Heart left ventricle (tissue), 16 donors: ENCODE measurements at regions of chrX and their contacts with region 1.

Region 1: GRCh38 chrX:34585561-34585960 is 71.5 kb downstream of the TMEM47 start:
- DNase-seq: no peak
- ATAC-seq: no peak
- H3K4me3 ChIP-seq: peak overlapping the region in 2 of 12 donors; percentile 18 to 29
- H3K27ac ChIP-seq: peak overlapping the region in 1 of 12 donors; percentile 19
- H3K4me1 ChIP-seq: no peaks in the 10 kb centered on the region
- H3K27me3 ChIP-seq: no peaks in the 10 kb centered on the region
- CTCF ChIP-seq: no peak
- POLR2A ChIP-seq: no peak

Region 2: DNA sequence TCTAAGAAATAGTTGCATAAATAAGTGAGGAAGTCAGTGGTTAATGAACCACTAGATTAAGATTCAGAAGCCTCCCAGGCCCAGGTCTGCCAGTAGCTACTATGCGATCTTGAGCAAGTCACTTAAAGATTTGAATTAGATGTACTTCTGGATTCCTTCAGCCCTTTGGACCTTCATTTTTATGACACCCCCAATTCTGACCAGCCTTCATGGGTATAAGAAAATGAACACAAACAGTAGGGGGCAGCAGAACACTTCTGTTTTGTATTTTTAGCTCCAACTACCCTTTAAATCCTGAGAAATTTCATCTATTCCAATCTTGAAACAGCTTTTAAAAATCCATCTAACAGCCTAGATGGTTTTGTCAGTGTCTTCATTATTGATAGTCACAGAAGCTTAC is 52.6 kb after region 1 on chrX:
- intact Hi-C with region 1: no loop called
- DNase-seq: no peak
- ATAC-seq: no peak
- H3K4me3 ChIP-seq: no peak overlapping the region
- H3K27ac ChIP-seq: no peak overlapping the region
- H3K4me1 ChIP-seq: peaks cover 0 to 32% (median 0%) of the 10 kb centered on the region in 12 donors
- H3K27me3 ChIP-seq: no peaks in the 10 kb centered on the region
- CTCF ChIP-seq: peak; percentile 34 to 61 (median 44)
- POLR2A ChIP-seq: no peak

Region 3: GRCh38 chrX:34656842-34657725 is 71.5 kb after region 1 on chrX and contains the start of gene TMEM47:
- intact Hi-C with region 1: loop called in 1 of 10 experiments (anchors 10 kb)
- DNase-seq: peak; percentile 78 to 81 (median 79)
- ATAC-seq: peak; percentile 95 to 99 (median 98)
- H3K4me3 ChIP-seq: peak within 1 kb of the TSS; percentile 26 to 94 (median 68)
- H3K27ac ChIP-seq: peak within 1 kb of the TSS; percentile 57 to 89 (median 82)
- H3K4me1 ChIP-seq: peaks cover 0 to 10% (median 0%) of the 10 kb centered on the region in 12 donors
- H3K27me3 ChIP-seq: peaks cover 0 to 11% (median 0%) of the 10 kb centered on the region in 9 donors
- CTCF ChIP-seq: peak in 1 of 12 donors; percentile 7
- POLR2A ChIP-seq: peak; percentile 32 to 87
- total RNA-seq, gene TMEM47: 28.8 to 47.5 (median 36.2) TPM

Region 4: GRCh38 chrX:35115205-35115604 is 529.6 kb after region 1 on chrX:
- intact Hi-C with region 1: no loop called
- DNase-seq: no peak
- ATAC-seq: no peak
- H3K4me3 ChIP-seq: no peak overlapping the region
- H3K27ac ChIP-seq: no peak overlapping the region
- H3K4me1 ChIP-seq: no peaks in the 10 kb centered on the region
- H3K27me3 ChIP-seq: no peaks in the 10 kb centered on the region
- CTCF ChIP-seq: no peak
- POLR2A ChIP-seq: no peak